ENCODE measurements at regions of chr22 and their contacts with region 1.

Region 1: DNA sequence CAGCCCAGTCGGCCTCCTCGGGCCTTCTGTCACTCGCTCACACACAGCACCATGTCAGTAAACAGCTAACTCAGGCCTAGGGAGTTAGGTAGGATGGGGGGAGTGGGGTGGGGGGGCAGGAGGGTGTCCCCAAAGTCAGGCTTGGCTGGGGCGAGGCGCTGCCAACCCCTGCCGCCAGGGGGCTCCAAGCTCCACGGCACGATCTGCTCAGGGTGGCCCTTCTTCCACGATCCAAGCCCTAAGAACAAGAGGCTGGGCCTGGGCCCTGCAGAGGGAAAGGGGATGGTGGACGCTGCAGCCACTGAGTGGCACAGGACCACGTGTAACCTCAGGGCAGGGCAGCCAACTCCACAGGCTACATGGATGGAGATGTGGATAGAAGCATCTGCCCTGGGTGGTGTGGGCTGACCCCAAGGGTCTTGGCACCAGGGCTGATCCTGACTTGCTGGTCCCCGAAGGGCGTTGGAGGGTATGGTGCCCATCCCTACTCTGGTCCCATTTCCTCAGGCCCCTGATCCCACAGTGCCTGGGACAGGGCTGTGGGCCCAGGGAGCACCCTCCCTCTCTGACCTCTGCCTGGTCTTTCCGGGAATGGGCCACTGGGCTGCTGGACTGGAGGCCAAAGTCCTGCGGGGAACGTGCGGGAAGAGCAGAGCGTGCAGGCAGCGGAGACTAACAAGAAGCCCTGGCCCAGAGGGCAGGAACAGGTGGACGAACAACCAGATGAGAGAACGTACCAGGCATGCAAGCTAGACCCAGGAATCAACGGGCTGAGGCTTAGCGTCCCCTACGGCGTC is 29.1 kb upstream of the TXNRD2 start:
- DNase-seq: peak; percentile 50 to 76
- ATAC-seq: peak; percentile 63 to 83 (median 78)
- H3K4me3 ChIP-seq: no peak overlapping the region
- H3K27ac ChIP-seq: peak overlapping the region in 3 of 10 donors; percentile 15 to 17 (median 15)
- H3K4me1 ChIP-seq: peaks cover 0 to 24% (median 8%) of the 10 kb centered on the region in 9 donors
- H3K27me3 ChIP-seq: no peaks in the 10 kb centered on the region
- CTCF ChIP-seq: peak; percentile 90 to 100 (median 95)

Region 2: DNA sequence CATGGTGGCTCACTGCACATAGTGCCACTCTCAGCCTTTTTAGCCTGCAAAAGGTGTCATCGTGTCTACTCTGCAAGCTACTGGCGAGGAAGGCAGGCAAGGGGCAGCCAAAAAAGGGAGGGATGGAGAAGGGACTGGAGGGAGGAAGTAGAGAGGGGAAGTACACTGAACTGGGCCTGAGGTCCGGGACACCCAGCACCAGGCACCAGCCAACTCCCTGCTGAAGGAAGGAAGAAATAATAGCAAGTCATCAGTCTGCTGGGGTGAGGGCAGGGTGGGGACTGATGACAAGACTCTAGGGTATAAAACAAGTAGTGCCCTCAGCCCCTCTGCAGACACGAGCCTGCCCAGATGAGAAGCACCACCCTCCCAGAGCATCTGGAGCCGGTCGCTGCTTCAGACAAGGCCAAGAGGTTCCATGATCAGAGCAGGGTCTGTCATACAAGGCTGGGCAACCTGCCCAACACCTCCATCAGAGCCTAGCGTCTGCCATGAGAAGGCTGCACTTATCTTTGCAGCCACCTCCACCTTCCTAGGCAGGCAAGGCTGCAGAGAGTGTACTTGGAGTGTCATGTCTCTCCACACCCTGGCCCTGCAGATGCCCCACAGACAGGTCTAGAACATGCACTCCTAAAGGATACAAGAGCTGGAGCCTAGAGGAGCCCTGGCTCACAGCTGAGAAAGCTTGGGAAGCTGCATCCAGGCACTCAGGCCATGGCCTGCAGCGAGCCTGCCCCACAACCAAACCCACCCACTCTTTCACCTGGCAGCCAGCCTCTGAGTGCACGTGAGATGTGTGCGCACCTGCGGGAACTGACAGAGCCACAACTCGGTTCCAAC is 38.1 kb before region 1 on chr22:
- intact Hi-C with region 1: no loop called
- DNase-seq: no peak
- ATAC-seq: peak; percentile 17 to 80 (median 43)
- H3K4me3 ChIP-seq: no peak overlapping the region
- H3K27ac ChIP-seq: no peak overlapping the region
- H3K4me1 ChIP-seq: peaks cover 0 to 13% (median 0%) of the 10 kb centered on the region in 9 donors
- H3K27me3 ChIP-seq: no peaks in the 10 kb centered on the region
- CTCF ChIP-seq: no peak

Region 3: GRCh38 chr22:19959043-19959586 is 11.6 kb before region 1 on chr22:
- intact Hi-C with region 1: no loop called
- DNase-seq: peak; percentile 76 to 83
- ATAC-seq: peak; percentile 45 to 72 (median 68)
- H3K4me3 ChIP-seq: peak overlapping the region in 6 of 10 donors; percentile 12 to 43 (median 33)
- H3K27ac ChIP-seq: peak overlapping the region in 6 of 10 donors; percentile 18 to 53 (median 40)
- H3K4me1 ChIP-seq: peaks cover 11 to 56% (median 35%) of the 10 kb centered on the region in 9 donors
- H3K27me3 ChIP-seq: no peaks in the 10 kb centered on the region
- CTCF ChIP-seq: no peak

Region 4: DNA sequence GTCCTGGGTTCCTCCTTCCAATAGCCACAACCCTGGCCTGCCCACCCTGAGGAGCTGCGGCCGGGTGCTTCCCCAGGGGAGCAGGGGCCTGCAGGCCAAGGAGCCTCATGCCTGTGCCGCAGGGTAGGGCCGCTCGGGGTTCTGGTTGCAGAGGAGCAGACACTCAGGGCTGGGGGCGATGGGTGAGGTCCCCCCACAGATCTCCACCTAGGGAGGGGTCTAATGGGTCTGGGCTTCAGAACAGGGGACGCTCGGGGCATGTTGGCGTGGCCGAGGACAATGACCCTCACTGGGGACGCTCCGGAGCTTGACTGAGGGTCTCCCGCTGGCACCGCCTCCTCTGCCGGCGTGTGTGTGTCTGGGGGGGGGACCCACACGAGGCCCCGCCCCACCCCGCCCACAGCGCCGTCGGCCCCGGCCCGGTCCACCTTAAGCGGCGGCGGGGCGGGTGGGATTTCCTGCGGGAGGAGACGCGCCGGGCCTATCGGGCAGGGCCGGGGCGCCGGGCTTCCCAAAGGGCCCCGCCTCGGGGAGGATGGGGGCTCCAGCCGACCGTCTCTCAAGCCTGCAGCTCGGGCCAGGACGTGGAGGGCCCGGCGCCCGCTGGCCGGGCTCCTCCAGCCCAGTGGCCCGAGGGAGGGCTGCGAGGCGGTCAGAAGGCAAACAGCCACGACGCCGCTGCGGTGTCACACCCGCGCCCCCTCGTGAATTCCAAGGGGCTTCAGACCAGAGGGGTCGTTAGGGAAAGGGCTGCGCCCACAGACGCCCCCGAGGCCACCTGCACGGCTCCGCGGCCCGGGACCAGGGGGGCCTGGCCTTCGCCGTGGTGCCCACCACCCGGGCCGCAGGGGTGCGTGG is 160.3 kb after region 1 on chr22:
- intact Hi-C with region 1: loop called in 3 of 10 experiments (anchors 10 kb)
- DNase-seq: peak; percentile 88 to 92
- ATAC-seq: peak; percentile 79 to 94 (median 89)
- H3K4me3 ChIP-seq: peak overlapping the region; percentile 85 to 100 (median 94)
- H3K27ac ChIP-seq: peak overlapping the region; percentile 89 to 100 (median 96)
- H3K4me1 ChIP-seq: peaks cover 34 to 58% (median 46%) of the 10 kb centered on the region in 9 donors
- H3K27me3 ChIP-seq: no peaks in the 10 kb centered on the region
- CTCF ChIP-seq: no peak

Measured in heart right ventricle (tissue), 16 donors.